ENCODE measurements at regions of chr18 and their contacts with region 1.

Region 1: DNA sequence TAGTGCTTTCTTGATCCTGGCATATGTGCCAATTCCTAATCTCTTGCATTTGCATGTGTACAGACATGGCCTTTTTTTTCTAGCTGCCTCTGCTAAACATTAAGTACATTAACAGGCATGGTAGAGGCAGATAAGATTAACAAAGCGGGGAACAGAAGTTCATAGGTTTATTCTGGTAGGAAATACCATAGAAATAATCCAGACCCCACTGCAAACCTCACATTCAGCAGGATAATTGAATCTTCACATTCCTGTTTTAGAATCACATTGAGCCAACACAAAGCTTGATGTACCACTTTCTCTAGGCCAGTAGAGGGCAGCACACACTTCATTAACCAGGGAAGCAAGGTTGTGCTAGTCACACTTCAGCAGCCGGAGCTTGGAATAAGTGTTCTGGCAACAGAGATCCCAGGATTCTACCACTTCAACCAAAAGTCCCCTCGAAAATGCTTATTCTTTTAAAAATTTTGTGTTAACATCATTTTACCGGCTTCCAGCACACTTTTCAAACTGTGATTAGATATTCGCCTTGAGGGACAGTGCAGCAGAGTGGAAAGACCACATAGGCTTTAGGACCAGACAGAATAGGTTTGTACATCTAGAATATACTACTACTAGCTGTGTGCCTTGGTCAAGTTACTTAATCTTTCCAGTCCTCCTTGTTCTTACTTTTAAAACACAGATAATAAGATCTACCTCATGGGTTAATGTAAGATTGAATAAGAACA is 420.2 kb upstream of the CHST9 start:
- DNase-seq: peak in 1 of 2 donors; percentile 66
- H3K4me3 ChIP-seq: no peak overlapping the region
- H3K27ac ChIP-seq: no peak overlapping the region
- H3K4me1 ChIP-seq: no peaks in the 10 kb centered on the region
- H3K27me3 ChIP-seq: no peaks in the 10 kb centered on the region
- CTCF ChIP-seq: peak; percentile 18 to 82 (median 59)

Region 2: DNA sequence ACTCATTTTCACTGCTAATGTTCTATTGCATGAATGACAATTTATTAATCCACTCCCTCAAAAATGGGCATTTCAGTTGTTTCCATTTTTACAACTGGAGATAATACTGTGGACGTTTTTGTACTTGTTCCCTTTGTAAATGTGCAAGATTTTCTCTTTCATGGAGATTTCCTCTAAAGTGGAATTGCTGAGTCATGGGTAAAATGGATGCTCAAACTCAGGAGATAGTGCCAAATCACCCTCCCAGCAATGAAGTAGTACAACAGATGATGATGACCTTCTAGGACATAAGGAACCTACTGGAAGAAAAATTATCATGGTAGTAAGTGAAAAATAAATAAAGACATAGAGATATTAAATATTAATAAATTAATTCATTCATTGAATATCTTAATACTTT is 40.7 kb after region 1 on chr18:
- intact Hi-C with region 1: no loop called
- DNase-seq: no peak
- H3K4me3 ChIP-seq: no peak overlapping the region
- H3K27ac ChIP-seq: no peak overlapping the region
- H3K4me1 ChIP-seq: no peaks in the 10 kb centered on the region
- H3K27me3 ChIP-seq: no peaks in the 10 kb centered on the region
- CTCF ChIP-seq: no peak

Region 3: DNA sequence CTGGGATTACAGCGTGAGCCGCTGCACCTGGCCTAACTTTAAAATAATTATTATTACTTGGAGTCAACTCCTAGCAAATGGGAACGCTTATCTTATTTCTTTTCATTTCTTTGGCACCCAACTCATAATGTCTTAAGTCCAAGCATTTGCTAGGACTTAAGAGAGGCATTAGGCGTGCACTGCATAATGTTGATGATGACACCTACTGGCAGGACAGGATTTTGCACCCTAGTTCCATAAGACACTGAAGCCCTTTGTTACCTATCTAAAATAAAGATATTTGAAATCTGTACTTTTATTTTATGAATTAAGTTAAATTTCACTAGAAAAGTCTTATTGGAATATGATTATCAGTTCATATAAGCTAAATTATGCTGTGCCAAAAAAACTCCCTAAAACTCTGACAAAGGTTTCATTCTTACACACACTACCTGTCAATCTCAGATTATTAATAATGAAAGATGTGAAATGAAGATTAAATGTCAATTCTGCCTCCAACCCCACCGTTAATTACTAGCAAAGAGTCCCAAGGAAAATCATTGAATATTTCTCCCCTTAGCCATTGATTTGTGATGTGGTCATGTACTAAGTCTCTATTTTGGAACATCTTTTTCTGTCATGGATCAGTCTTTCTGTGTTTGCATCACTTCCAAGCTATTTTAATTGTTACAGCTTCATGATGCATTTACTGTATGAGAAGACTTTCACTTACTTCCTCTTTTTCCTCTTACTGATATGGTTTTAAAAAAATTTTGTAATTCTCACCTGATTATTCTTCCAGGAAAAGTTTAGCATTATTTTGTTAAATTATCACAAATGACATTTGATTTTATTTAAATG is 584.3 kb after region 1 on chr18:
- intact Hi-C with region 1: loop called (anchors 10 kb)
- DNase-seq: no peak
- H3K4me3 ChIP-seq: no peak overlapping the region
- H3K27ac ChIP-seq: no peak overlapping the region
- H3K4me1 ChIP-seq: no peaks in the 10 kb centered on the region
- H3K27me3 ChIP-seq: no peaks in the 10 kb centered on the region
- CTCF ChIP-seq: peak in 2 of 3 experiments; percentile 42 to 58